Activated CD4-positive, alpha-beta memory T cell treated with anti-CD3 and anti-CD28 coated beads for 36 hours (primary cell): ENCODE measurements at regions of chr22 and their contacts with region 1.

Region 1: DNA sequence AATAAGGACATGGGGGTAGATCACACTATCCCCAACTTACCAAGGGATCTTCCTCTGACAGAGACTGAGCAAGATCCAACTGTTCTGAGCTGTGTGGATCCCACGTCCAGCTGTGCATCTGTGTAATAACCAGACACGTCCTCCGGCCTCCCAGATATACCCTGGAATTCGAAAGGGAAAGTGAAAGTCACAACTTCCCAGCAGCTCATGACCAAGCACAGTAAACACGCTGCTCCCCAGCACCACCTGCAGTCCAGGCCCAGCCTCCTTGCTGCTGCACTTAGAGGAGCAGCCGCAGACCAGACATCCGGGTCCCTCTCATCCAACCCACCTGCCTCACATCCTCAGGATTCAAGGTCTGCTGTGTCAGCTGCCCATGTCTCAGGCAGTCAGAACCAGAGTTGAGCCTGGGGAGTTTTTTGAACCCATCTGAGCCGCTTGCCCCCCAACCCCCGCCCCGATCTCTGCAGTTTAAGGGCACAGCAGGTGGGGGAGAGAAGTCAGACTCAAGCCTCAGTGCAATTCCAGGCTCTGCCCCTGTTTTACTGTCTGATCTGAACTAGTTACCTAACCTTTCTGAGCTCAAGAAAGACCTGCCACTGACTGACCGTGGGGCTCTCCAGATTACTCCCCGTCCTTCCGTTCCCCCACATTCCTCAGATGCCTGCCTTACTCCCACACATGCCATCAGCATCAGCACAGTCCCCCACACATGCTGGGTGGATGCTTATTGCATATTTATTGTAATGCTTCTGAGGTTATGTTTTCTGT is at the start of gene APOL2:
- DNase-seq: peak; percentile 93
- H3K4me3 Mint-ChIP-seq: peak within 1 kb of the TSS; percentile 98
- H3K27ac Mint-ChIP-seq: peak within 1 kb of the TSS; percentile 99
- H3K4me1 Mint-ChIP-seq: peaks cover 45% of the 10 kb centered on the region
- H3K27me3 Mint-ChIP-seq: no peaks in the 10 kb centered on the region
- total RNA-seq, gene APOL2: 76.4 to 82.9 TPM

Region 2: GRCh38 chr22:35648066-35649025 is 591.2 kb before region 1 on chr22 and contains the start of gene APOL6:
- CTCF ChIA-PET with region 1: no interaction called
- POLR2A ChIA-PET with region 1: no interaction called
- intact Hi-C with region 1: loop called (anchors 10 kb)
- DNase-seq: peak; percentile 79
- H3K4me3 Mint-ChIP-seq: peak within 1 kb of the TSS; percentile 99
- H3K27ac Mint-ChIP-seq: peak within 1 kb of the TSS; percentile 100
- H3K4me1 Mint-ChIP-seq: peaks cover 42% of the 10 kb centered on the region
- H3K27me3 Mint-ChIP-seq: no peaks in the 10 kb centered on the region
- total RNA-seq, gene APOL6: 26.7 to 27.7 TPM

Region 3: GRCh38 chr22:36156515-36157419 is 82.8 kb before region 1 on chr22:
- CTCF ChIA-PET with region 1: interaction called, 7 read pairs
- POLR2A ChIA-PET with region 1: no interaction called
- intact Hi-C with region 1: loop called (anchors 2 kb)
- DNase-seq: peak; percentile 88
- H3K4me3 Mint-ChIP-seq: peak overlapping the region; percentile 90
- H3K27ac Mint-ChIP-seq: peak overlapping the region; percentile 96
- H3K4me1 Mint-ChIP-seq: peaks cover 92% of the 10 kb centered on the region
- H3K27me3 Mint-ChIP-seq: no peaks in the 10 kb centered on the region

Region 4: DNA sequence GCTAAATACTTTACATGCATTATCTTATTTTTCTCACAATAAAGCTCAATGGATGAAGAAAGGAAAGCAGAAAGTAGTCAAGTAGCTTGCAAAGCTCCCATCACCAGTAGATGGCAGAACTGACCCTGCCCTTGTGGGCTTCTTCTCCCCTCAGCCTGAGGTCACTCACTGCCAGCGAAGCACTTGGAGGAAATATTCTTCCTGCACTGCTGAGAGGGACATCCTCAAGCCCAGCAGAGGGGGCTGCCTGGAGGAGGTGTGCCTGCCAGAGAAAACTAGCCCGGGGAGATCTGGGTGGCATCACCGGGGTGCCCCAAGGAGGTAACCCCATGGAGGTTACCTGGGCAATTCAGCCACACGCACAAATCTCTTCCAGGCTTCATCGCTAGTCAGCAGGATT is 44.6 kb before region 1 on chr22:
- CTCF ChIA-PET with region 1: interaction called, 16 read pairs
- POLR2A ChIA-PET with region 1: interaction called, 4 read pairs
- intact Hi-C with region 1: loop called (anchors 1 kb)
- DNase-seq: peak; percentile 63
- H3K4me3 Mint-ChIP-seq: no peak overlapping the region
- H3K27ac Mint-ChIP-seq: no peak overlapping the region
- H3K4me1 Mint-ChIP-seq: peaks cover 24% of the 10 kb centered on the region
- H3K27me3 Mint-ChIP-seq: no peaks in the 10 kb centered on the region

Region 5: DNA sequence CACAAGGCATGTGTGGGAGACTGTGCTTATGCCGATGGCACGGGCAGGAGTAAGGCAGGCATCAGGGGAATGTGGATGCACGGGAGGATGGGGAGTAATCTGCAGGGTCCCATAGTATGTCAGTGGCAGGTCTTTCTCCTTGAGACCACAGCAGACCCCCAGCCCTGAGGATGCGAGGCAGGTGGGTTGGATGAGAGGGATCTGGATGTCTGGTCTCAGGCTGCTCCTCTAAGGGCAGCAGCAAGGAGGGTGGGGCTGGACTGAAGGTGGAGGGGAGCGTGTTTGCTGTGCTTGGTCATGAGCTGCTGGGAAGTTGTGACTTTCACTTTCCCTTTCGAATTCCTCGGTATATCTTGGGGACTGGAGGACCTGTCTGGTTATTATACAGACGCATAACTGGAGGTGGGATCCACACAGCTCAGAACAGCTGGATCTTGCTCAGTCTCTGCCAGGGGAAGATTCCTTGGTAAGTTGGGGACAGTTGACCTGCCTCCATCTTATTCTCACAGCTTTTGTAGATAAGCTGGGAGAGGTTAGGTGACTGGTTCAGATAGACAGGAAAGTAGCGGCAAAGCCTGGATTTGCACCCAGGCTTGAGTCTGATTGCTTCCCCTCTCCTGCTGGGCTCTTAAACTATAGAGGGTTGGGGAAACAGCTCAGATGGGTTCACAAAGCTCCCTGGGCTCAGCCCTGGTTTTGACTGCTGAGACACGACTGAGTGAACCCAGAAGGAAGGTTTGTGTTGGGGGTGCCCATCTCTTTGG is 13.3 kb after region 1 on chr22 and contains the start of gene APOL1:
- CTCF ChIA-PET with region 1: interaction called, 42 read pairs
- POLR2A ChIA-PET with region 1: interaction called, 38 read pairs
- intact Hi-C with region 1: loop called (anchors 1 kb)
- DNase-seq: peak; percentile 71
- H3K4me3 Mint-ChIP-seq: peak within 1 kb of the TSS; percentile 89
- H3K27ac Mint-ChIP-seq: peak within 1 kb of the TSS; percentile 96
- H3K4me1 Mint-ChIP-seq: peaks cover 62% of the 10 kb centered on the region
- H3K27me3 Mint-ChIP-seq: no peaks in the 10 kb centered on the region
- total RNA-seq, gene APOL1: 44.7 to 46.3 TPM

Region 6: GRCh38 chr22:36277482-36278291 is 38.1 kb after region 1 on chr22:
- CTCF ChIA-PET with region 1: interaction called, 16 read pairs
- POLR2A ChIA-PET with region 1: interaction called, 11 read pairs
- intact Hi-C with region 1: loop called (anchors 1 kb)
- DNase-seq: peak; percentile 86
- H3K4me3 Mint-ChIP-seq: peak overlapping the region; percentile 37
- H3K27ac Mint-ChIP-seq: peak overlapping the region; percentile 75
- H3K4me1 Mint-ChIP-seq: peaks cover 39% of the 10 kb centered on the region
- H3K27me3 Mint-ChIP-seq: no peaks in the 10 kb centered on the region

Region 7: DNA sequence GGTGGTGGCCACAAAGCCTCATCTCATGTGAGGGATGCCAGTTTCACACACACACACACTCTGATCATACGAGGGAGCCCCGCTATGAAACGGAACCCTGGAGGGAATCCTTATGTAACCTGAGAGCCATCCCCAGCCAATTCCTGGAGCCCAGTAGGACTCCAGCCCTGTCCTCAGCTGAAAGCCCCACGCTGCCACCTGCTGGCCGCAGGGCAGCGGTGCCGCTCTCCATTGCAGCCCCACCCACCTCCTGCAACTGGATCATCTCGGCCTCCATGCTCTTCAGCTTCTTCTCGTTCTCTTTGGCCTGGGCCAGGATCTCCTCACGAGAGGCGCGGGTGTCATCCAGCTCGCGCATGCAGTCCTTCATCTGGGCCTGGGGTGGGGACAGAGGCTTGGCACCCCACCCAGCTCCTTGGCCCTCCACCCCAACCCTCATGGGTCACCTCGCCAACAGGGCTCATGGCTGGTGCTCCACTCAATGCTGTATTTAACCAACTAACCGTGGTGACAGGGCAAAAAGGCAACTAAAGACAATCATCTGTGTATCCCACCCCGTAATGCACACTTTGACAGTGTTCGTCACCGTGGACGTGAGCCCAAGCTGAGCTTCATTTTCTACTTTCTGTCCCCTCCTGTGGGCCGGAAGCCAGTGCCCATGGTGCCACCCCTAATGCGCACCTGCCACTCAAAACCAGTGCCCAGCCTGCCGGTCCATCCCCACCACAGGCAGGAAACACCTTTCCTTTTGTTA is 47.1 kb after region 1 on chr22:
- CTCF ChIA-PET with region 1: interaction called, 25 read pairs
- POLR2A ChIA-PET with region 1: interaction called, 3 read pairs
- intact Hi-C with region 1: no loop called
- DNase-seq: peak; percentile 77
- H3K4me3 Mint-ChIP-seq: peak overlapping the region; percentile 4
- H3K27ac Mint-ChIP-seq: peak overlapping the region; percentile 60
- H3K4me1 Mint-ChIP-seq: peaks cover 23% of the 10 kb centered on the region
- H3K27me3 Mint-ChIP-seq: no peaks in the 10 kb centered on the region